Activated CD4-positive, alpha-beta T cell treated with anti-CD3 and anti-CD28 coated beads for 36 hours (primary cell): ENCODE measurements at regions of chr17 and their contacts with region 1.

Region 1: DNA sequence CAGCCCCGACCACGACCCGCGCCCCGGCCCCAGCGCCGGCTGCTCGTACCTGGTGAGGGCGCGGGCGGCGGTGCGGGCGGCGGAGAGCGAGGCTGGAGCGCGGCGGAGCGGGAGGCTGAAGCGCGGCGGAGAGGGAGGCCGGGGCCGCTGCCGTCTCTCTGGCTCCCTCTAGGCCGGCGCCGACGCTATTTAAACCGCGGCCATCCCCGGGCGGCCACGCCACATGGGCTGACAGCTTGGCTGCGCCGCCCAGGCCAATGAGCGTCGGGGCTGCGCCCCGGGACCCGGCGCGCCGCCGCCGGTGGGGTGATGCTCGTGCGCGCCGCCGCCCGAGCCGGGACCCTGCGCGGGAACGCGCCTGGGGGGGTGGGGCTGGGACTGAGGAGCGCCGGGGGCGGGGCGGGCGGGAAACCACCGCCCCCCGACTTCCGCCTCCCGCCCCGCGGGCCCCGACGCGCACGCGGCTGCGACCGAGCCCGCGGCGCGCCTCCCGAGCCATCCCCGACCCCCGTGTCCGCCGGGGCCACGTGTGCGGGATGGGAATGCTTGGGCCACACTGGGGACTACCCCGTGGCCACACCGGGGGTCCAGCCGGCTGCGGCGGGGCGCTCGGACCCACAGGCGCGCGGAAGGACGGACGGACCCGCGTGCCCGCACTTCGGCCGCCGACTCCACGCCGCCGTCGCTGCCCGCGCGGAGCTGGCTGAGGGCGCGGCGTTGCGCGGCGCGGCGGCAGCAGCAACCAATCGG is at the start of gene FASN:
- DNase-seq: peak; percentile 97
- ATAC-seq: peak; percentile 86
- H3K4me3 Mint-ChIP-seq: peak within 1 kb of the TSS; percentile 78
- H3K27ac Mint-ChIP-seq: peak within 1 kb of the TSS; percentile 19
- H3K4me1 Mint-ChIP-seq: peaks cover 14% of the 10 kb centered on the region
- H3K27me3 Mint-ChIP-seq: no peaks in the 10 kb centered on the region
- total RNA-seq, gene FASN: 239 to 259 TPM

Region 2: DNA sequence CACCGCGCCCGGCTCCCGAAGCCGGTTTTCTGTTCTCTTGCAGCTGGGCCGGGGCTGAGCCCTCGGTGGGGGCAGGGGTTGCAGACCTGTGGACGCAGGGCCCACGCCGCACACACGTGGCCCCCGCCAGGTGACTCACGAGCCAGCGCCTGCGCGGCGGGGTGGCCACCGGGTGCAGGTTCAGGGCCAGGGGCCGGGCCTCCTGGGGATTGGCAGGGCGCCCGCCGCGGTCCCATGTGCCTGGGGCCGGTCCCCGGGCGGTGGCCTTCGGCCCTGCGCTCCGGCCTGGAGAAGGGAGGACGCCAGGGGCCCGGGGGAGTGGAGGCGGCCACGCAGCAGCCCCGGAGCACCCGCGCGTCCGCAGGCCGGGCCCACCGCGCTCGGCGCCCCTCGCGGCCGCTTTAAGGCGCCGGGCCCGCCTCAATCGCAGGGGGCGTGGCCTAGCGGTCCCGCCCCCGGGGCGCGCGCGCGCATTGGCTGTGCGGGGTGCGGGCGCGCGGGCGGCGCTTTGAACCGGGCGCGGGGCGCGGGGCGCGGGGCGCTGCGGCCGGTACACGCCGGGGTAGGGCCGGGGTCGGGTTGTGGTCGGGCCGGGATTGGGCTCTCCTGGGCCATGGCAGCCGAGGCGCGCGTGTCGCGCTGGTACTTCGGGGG is 386.3 kb before region 1 on chr17 and contains the start of gene SLC25A10:
- CTCF ChIA-PET with region 1: no interaction called
- POLR2A ChIA-PET with region 1: no interaction called
- intact Hi-C with region 1: loop called in 1 of 2 experiments (anchors 1 kb)
- DNase-seq: peak; percentile 93
- ATAC-seq: peak; percentile 87
- H3K4me3 Mint-ChIP-seq: peak within 1 kb of the TSS; percentile 89
- H3K27ac Mint-ChIP-seq: peak within 1 kb of the TSS; percentile 84
- H3K4me1 Mint-ChIP-seq: peaks cover 24% of the 10 kb centered on the region
- H3K27me3 Mint-ChIP-seq: no peaks in the 10 kb centered on the region
- total RNA-seq, gene SLC25A10: 28.6 to 31.8 TPM

Region 3: GRCh38 chr17:81901167-81902022 is 196.9 kb before region 1 on chr17:
- CTCF ChIA-PET with region 1: no interaction called
- POLR2A ChIA-PET with region 1: no interaction called
- intact Hi-C with region 1: no loop called
- DNase-seq: no peak
- ATAC-seq: peak; percentile 6
- H3K4me3 Mint-ChIP-seq: no peak overlapping the region
- H3K27ac Mint-ChIP-seq: no peak overlapping the region
- H3K4me1 Mint-ChIP-seq: peaks cover 5% of the 10 kb centered on the region
- H3K27me3 Mint-ChIP-seq: peaks cover 5% of the 10 kb centered on the region

Region 4: DNA sequence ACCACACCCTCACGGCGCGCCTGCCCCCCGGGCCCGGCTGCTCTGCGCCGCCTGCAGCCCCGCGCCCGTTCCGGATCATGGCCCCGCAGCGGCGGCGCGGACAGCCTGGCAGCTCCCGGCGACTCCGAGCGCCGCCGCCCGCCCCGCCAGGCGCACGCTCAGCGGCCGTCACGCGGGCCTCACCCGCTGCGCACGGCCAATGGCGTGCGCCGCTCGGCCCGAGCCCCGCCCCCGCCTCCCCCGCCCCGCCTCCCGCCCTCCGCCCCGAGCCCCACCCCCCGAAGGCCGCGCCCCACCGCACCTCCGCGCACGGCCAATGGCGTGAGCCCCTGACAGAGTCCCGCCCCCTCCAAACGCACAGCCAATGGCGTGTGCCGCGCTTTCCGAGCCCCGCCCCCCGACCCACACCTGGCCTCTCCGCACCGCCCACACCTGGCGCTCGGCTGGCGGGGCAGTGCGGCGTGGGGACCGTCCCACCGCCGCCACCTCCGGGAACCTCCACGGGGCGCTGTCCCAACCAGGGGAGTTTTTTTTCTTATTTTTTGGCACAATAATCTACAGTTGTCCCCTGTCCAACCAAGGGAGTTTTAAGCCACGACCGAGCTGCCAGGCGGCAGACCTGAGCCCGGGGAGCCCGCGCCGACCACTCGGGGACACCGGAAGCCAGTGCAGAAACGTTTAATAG is 186.8 kb before region 1 on chr17 and contains the start of gene PCYT2:
- CTCF ChIA-PET with region 1: no interaction called
- POLR2A ChIA-PET with region 1: no interaction called
- intact Hi-C with region 1: loop called in 1 of 2 experiments (anchors 1 kb)
- DNase-seq: peak; percentile 97
- ATAC-seq: peak; percentile 96
- H3K4me3 Mint-ChIP-seq: peak within 1 kb of the TSS; percentile 79
- H3K27ac Mint-ChIP-seq: no peak within 1 kb of the TSS
- H3K4me1 Mint-ChIP-seq: peaks cover 14% of the 10 kb centered on the region
- H3K27me3 Mint-ChIP-seq: no peaks in the 10 kb centered on the region
- total RNA-seq, gene PCYT2: 19.7 to 24.0 TPM

Region 5: DNA sequence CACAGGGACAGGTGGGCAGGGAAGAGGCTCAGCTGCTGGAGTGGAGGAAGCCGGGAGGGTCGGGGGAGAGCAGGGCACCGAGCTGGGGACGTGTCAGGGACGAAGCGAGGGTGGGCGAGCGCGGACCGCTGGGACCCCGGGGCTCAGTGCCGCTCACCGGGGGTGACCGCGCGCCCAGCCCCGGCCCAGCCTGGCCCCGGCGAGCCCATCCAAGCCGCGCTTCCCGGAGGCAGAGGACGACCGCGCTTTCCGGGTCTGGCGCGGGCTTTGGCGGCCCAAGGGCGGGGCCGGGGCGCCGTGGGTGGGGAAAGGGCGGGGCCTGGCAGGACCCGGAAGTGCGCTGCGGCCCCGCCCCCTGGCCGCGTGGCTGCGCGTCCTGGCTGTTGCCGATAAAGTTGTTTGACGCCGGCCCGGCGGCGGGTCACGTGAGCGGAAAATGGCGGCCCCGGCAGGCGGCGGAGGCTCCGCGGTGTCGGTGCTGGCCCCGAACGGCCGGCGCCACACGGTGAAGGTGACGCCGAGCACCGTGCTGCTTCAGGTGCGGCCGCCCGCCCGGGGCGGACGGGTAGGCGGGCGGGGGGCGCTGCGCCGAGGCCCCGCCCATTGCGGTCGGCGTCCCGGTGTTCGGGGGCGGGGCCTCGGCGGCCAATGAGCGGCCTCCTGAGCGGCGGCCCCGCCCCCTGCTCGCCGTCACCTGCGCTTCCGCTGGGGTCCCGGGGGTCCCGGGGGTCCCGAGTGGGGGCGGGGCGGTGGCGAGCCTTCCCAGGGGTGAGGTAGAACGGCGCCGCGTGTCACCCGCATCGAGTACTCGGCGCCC is 120.8 kb before region 1 on chr17 and contains the start of gene ASPSCR1:
- CTCF ChIA-PET with region 1: no interaction called
- POLR2A ChIA-PET with region 1: no interaction called
- intact Hi-C with region 1: loop called in 1 of 2 experiments (anchors 1 kb)
- DNase-seq: peak; percentile 95
- ATAC-seq: peak; percentile 83
- H3K4me3 Mint-ChIP-seq: peak within 1 kb of the TSS; percentile 94
- H3K27ac Mint-ChIP-seq: peak within 1 kb of the TSS; percentile 98
- H3K4me1 Mint-ChIP-seq: peaks cover 32% of the 10 kb centered on the region
- H3K27me3 Mint-ChIP-seq: no peaks in the 10 kb centered on the region
- total RNA-seq, gene ASPSCR1: 23.3 to 26.5 TPM

Region 6: GRCh38 chr17:82065638-82066303 is 32.5 kb before region 1 on chr17 and contains the start of gene DUS1L:
- CTCF ChIA-PET with region 1: no interaction called
- POLR2A ChIA-PET with region 1: no interaction called
- intact Hi-C with region 1: loop called in 1 of 2 experiments (anchors 1 kb)
- DNase-seq: peak; percentile 83
- ATAC-seq: peak; percentile 93
- H3K4me3 Mint-ChIP-seq: peak within 1 kb of the TSS; percentile 84
- H3K27ac Mint-ChIP-seq: peak within 1 kb of the TSS; percentile 91
- H3K4me1 Mint-ChIP-seq: peaks cover 14% of the 10 kb centered on the region
- H3K27me3 Mint-ChIP-seq: no peaks in the 10 kb centered on the region
- total RNA-seq, gene DUS1L: 119 to 124 TPM

Region 7: GRCh38 chr17:82273327-82274133 is 175.3 kb after region 1 on chr17 and contains the start of gene CSNK1D:
- CTCF ChIA-PET with region 1: no interaction called
- POLR2A ChIA-PET with region 1: no interaction called
- intact Hi-C with region 1: loop called in 1 of 2 experiments (anchors 1 kb)
- DNase-seq: peak; percentile 96
- ATAC-seq: peak; percentile 81
- H3K4me3 Mint-ChIP-seq: peak within 1 kb of the TSS; percentile 90
- H3K27ac Mint-ChIP-seq: peak within 1 kb of the TSS; percentile 94
- H3K4me1 Mint-ChIP-seq: peaks cover 39% of the 10 kb centered on the region
- H3K27me3 Mint-ChIP-seq: no peaks in the 10 kb centered on the region
- total RNA-seq, gene CSNK1D: 118 to 182 TPM

Region 8: GRCh38 chr17:82648166-82648668 is 550.0 kb after region 1 on chr17 and contains the start of gene WDR45B:
- CTCF ChIA-PET with region 1: no interaction called
- POLR2A ChIA-PET with region 1: no interaction called
- intact Hi-C with region 1: loop called in 1 of 2 experiments (anchors 1 kb)
- DNase-seq: peak; percentile 95
- ATAC-seq: peak; percentile 88
- H3K4me3 Mint-ChIP-seq: peak within 1 kb of the TSS; percentile 82
- H3K27ac Mint-ChIP-seq: peak within 1 kb of the TSS; percentile 65
- H3K4me1 Mint-ChIP-seq: peaks cover 24% of the 10 kb centered on the region
- H3K27me3 Mint-ChIP-seq: no peaks in the 10 kb centered on the region
- total RNA-seq, gene WDR45B: 74.1 to 74.8 TPM